Activated CD8-positive, alpha-beta T cell treated with anti-CD3 and anti-CD28 coated beads, Interleukin-2, amount 10 ng/mL, durations not matched to agents 7 days and 5 days (primary cell): ENCODE measurements at regions of chr9 and their contacts with region 1.

Region 1: DNA sequence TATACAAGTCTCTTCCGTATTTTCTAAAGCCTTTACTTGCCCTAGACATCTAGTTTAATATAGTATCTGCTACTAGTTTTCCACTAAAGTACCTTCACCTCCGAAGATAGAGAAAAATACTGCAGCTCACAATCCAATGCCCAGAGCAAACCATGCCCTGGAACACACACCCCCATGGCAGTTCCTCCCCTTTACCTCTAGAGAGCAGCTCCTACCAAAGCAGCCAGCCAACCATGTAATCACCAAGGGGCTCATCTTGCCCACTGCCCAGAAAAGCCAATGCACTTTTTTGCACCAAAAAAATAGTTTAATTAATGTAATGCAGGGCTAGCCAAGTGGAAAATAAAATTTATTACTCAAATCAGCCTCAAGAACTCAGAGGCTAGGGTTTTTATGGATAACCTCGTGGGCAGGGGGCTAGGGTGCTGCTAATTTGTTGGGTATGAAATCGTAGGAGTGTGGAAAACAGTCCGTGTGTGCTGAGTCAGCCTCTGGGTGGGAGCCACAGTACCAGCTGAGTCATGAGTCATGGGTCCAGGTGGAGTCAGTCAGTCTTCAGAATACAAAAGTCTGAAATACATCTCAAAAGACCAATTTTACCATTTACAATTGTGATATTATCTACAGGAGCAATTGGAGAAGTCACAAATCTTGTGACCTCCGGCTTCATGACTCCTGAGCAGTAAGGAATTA is 120.1 kb upstream of the ACO1 start:
- DNase-seq: no peak
- ATAC-seq: no peak
- H3K4me3 Mint-ChIP-seq: no peak overlapping the region
- H3K27ac Mint-ChIP-seq: no peak overlapping the region
- H3K4me1 Mint-ChIP-seq: no peaks in the 10 kb centered on the region
- H3K27me3 Mint-ChIP-seq: no peaks in the 10 kb centered on the region

Region 2: GRCh38 chr9:32251539-32251938 is 12.8 kb before region 1 on chr9:
- CTCF ChIA-PET with region 1: interaction called, 10 read pairs
- POLR2A ChIA-PET with region 1: no interaction called
- DNase-seq: peak; percentile 46
- ATAC-seq: no peak
- H3K4me3 Mint-ChIP-seq: no peak overlapping the region
- H3K27ac Mint-ChIP-seq: no peak overlapping the region
- H3K4me1 Mint-ChIP-seq: no peaks in the 10 kb centered on the region
- H3K27me3 Mint-ChIP-seq: no peaks in the 10 kb centered on the region